H1 (cell line): ENCODE measurements at regions of chr12 and their contacts with region 1.

Region 1: GRCh38 chr12:112992541-112993398 is 14.5 kb downstream of the OAS2 start:
- DNase-seq: peak; percentile 29 to 91
- H3K4me3 ChIP-seq: no peak overlapping the region
- H3K27ac ChIP-seq: no peak overlapping the region
- H3K4me1 ChIP-seq: no peaks in the 10 kb centered on the region; a peak in 1 of 7 replicates
- H3K27me3 ChIP-seq: no peaks in the 10 kb centered on the region
- CTCF ChIP-seq: peak; percentile 90 to 99 (median 99)
- EP300 ChIP-seq: no peak
- POLR2A ChIP-seq: no peak
- RAD21 ChIP-seq: peak; percentile 89 to 93

Region 2: GRCh38 chr12:113005754-113006153 is 13.0 kb after region 1 on chr12:
- CTCF ChIA-PET with region 1: interaction called, 202 read pairs
- POLR2A ChIA-PET with region 1: interaction called, 4 read pairs
- DNase-seq: no peak
- H3K4me3 ChIP-seq: no peak overlapping the region
- H3K27ac ChIP-seq: no peak overlapping the region
- H3K4me1 ChIP-seq: no peaks in the 10 kb centered on the region
- H3K27me3 ChIP-seq: peaks cover 0 to 7% (median 0%) of the 10 kb centered on the region in 4 experiments; a peak in 1 of 7 replicates
- CTCF ChIP-seq: peak in 2 of 3 experiments; percentile 48 to 55; a peak in 2 of 4 replicates
- EP300 ChIP-seq: no peak
- POLR2A ChIP-seq: no peak
- RAD21 ChIP-seq: peak; percentile 28 to 39; a peak in 3 of 4 replicates

Region 3: GRCh38 chr12:113040722-113041171 is 48.0 kb after region 1 on chr12:
- CTCF ChIA-PET with region 1: interaction called, 17 read pairs
- POLR2A ChIA-PET with region 1: no interaction called
- DNase-seq: no peak
- H3K4me3 ChIP-seq: no peak overlapping the region
- H3K27ac ChIP-seq: no peak overlapping the region
- H3K4me1 ChIP-seq: no peaks in the 10 kb centered on the region
- H3K27me3 ChIP-seq: no peaks in the 10 kb centered on the region
- CTCF ChIP-seq: no peak
- EP300 ChIP-seq: no peak
- POLR2A ChIP-seq: no peak
- RAD21 ChIP-seq: no peak

Region 4: DNA sequence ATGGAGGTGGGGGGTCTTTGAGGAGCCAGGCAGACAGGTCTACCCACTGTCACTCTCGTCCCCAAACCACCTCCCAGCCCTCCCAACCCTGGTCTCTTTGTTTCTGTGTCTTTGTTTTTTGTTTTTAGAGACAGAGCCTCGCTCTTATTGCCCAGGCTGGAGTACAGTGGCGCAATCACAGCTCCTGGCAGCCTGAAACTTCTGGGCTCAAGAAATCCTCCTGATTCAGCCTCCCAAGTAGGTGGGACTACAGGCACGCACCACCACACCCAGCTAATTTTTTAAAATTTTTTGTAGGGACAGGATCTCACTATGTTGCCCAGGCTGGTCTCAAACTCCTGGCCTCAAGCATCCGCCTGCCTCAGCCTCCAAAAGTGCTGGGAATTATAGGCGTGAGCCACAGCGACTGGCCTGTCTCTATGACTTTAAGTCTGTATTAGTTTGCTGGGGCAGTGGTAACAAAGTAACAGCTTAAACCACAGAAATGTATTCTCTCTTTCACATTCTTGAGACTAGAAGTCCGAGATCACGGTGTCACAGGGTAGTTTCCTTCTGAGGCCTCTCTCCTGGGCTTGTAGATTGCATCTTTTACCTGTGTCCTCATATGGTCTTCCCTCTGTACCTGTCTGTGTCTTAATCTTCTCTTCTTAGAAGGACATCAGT is 89.8 kb after region 1 on chr12:
- CTCF ChIA-PET with region 1: interaction called, 10 read pairs
- POLR2A ChIA-PET with region 1: no interaction called
- DNase-seq: no peak
- H3K4me3 ChIP-seq: no peak overlapping the region
- H3K27ac ChIP-seq: no peak overlapping the region
- H3K4me1 ChIP-seq: peaks cover 0 to 8% (median 7%) of the 10 kb centered on the region in 4 experiments; a peak in 5 of 7 replicates
- H3K27me3 ChIP-seq: peaks cover 9 to 13% (median 11%) of the 10 kb centered on the region in 4 experiments
- CTCF ChIP-seq: no peak
- EP300 ChIP-seq: no peak
- POLR2A ChIP-seq: no peak
- RAD21 ChIP-seq: no peak

Region 5: GRCh38 chr12:113103756-113104450 is 111.1 kb after region 1 on chr12:
- CTCF ChIA-PET with region 1: interaction called, 67 read pairs
- POLR2A ChIA-PET with region 1: no interaction called
- DNase-seq: peak; percentile 70 to 89
- H3K4me3 ChIP-seq: peak overlapping the region; percentile 35 to 65 (median 46)
- H3K27ac ChIP-seq: peak overlapping the region; percentile 45; the same call in 1 of the 2 replicates
- H3K4me1 ChIP-seq: peaks cover 0 to 3% (median 1%) of the 10 kb centered on the region in 4 experiments; a peak in 2 of 7 replicates
- H3K27me3 ChIP-seq: 0 out of 7 replicates have a peak, but pooled peaks cover 0 to 2% (median 0%) of the 10 kb centered on the region in 4 experiments
- CTCF ChIP-seq: peak; percentile 13 to 36 (median 26)
- EP300 ChIP-seq: no peak
- POLR2A ChIP-seq: peak in 1 of 2 experiments; percentile 65; a peak in 1 of 3 replicates
- RAD21 ChIP-seq: 0 out of 4 replicates have a peak, but pooled peaks of 1 of the 2 experiments have one; percentile 7

Region 6: GRCh38 chr12:113174461-113175384 is 182.0 kb after region 1 on chr12:
- CTCF ChIA-PET with region 1: interaction called, 11 read pairs
- POLR2A ChIA-PET with region 1: no interaction called
- DNase-seq: peak in 1 of 2 experiments; percentile 96
- H3K4me3 ChIP-seq: no peak overlapping the region
- H3K27ac ChIP-seq: no peak overlapping the region
- H3K4me1 ChIP-seq: no peaks in the 10 kb centered on the region
- H3K27me3 ChIP-seq: no peaks in the 10 kb centered on the region
- CTCF ChIP-seq: peak; percentile 88 to 97 (median 95)
- EP300 ChIP-seq: no peak
- POLR2A ChIP-seq: no peak
- RAD21 ChIP-seq: peak; percentile 86 to 89